Right ventricle myocardium superior (tissue), 1 donor: ENCODE measurements at regions of chr10 and their contacts with region 1.

Region 1: GRCh38 chr10:91251430-91252056 is 31.1 kb downstream of the PCGF5 start:
- DNase-seq: no peak
- ATAC-seq: peak; percentile 81

Region 2: GRCh38 chr10:90912174-90912573 is 339.4 kb before region 1 on chr10:
- intact Hi-C with region 1: loop called (anchors 5 kb)
- DNase-seq: no peak
- ATAC-seq: peak; percentile 24

Region 3: DNA sequence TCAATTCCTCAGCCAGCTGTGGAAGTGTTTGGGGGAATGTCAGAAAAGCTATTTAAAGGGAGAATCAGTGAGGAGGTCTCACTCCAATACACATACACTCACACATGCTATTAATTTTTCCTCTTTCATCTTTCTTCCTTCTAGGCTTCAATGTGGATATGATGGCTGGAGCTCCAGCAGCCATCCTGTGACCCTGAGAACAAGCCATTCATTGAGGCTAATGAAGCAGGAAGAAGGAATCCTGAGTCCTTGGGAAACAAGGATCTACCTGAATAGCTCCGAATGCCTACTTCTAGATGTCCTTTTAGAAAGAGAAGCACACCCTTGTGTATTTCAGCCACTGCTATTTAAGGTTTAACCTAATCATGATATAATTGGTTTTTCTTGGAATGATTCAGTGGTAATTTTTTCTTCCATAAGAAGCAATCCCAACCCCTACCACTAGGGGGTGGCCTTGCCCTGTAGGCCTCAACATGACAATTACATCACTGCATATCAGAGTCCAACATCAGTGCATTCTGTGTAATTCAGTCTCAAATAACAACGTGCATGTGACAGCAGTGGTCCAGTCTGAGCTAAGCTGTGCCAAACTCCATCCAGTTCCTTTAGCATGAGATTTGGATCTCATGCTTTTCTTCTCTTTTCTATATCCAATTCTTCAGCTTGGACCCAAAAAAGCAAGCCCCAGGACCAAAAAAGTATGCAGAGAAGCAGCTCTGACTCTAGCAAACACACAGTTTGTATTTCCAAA is 245.4 kb before region 1 on chr10:
- intact Hi-C with region 1: loop called (anchors 5 kb)
- DNase-seq: peak; percentile 52
- ATAC-seq: peak; percentile 89

Region 4: DNA sequence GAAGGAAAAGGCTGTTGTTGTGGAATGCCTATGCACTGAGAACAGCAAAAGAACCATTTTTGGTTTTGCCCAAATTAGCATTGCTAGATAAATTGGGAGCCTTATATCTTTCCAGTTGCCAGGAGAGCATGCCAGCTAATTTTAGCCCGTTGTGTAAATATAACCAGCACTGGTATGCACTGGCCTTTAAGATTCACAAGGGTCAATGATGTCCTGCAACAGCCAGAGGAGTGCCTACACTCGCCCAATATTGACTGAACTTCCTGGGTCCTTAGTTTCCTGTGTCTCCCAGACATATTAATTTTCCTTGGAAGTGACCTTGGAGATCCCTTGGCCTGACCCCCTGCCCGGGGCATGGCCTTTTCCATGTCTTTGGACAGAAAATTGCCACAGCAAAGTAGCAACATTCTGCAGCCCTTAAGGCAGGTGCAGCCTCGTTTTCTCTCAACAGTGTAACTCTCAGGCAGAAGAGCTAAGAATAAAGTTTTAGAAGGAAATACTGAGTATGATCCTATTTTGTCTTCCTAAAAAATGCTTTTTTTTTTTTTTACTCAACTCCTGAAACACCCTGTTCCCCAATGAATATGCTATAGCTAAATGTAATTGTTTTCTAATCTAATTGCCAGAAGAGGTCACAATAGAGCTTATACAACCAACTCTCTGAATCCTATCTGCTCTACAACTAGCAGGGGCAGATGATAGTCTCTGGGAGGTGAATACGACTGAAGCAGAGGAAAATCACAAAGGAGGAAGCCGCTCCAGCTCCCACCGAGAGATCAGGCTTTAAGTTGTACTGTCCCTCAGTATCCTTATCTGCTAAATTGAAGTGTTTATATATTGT is 163.0 kb before region 1 on chr10:
- intact Hi-C with region 1: loop called (anchors 5 kb)
- DNase-seq: no peak
- ATAC-seq: peak; percentile 92

Region 5: GRCh38 chr10:91420868-91421267 is 169.3 kb after region 1 on chr10:
- intact Hi-C with region 1: no loop called
- DNase-seq: no peak
- ATAC-seq: no peak